Ascending aorta (tissue), 2 donors: ENCODE measurements at regions of chr13 and their contacts with region 1.

Region 1: DNA sequence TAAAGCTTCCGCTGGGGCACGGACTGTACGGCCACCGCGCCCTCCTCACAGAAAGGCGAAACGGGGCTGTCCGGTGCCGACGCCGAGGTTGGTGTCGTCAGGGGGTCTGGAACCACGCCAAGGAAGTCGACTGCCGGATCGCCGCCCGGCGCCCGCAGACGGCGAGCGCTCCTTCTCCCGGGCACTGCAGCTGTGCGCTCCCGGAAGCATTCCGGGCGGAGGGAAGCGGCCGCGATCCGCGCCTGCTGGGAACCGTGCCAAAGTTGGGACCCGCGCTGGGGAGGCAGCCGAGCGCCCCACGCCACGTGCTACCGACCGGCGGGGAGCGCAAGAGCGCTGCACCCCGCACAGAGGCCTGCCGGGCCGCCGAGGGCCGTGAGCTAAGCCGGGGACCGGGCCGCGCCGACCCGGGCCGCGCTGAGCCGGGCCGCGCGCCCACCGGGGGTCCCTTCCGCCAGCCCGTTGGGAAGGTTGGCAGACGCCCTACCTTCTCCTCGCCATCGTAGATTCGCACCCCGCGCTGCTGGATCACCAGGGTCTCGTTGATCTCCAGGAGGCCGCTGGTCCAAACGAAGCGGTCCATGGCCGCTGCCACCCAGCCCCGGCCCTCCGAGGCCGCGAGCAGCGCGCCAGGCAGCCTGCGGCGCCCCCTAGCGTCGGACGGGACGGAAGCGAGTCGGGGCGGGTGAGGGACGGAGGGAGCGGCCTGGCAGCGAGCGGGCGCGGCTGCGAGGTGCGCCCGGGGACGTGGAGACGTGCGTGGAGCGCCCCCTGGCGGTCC is at the start of gene VPS36:
- DNase-seq: peak; percentile 66 to 98
- H3K4me3 ChIP-seq: peak within 1 kb of the TSS; percentile 77 to 88
- H3K27ac ChIP-seq: peak within 1 kb of the TSS; percentile 85 to 88
- H3K4me1 ChIP-seq: peaks cover 0 to 5% of the 10 kb centered on the region in 2 donors
- H3K27me3 ChIP-seq: no peaks in the 10 kb centered on the region
- CTCF ChIP-seq: peak; percentile 97 to 99 (median 98)
- total RNA-seq, gene VPS36: 69.3 TPM

Region 2: GRCh38 chr13:52011632-52012511 is 438.3 kb before region 1 on chr13 and contains the start of gene ALG11:
- intact Hi-C with region 1: loop called (anchors 1 kb)
- DNase-seq: peak; percentile 97 to 100
- H3K4me3 ChIP-seq: peak within 1 kb of the TSS; percentile 73 to 75
- H3K27ac ChIP-seq: peak within 1 kb of the TSS; percentile 65 to 70
- H3K4me1 ChIP-seq: peaks cover 0 to 9% of the 10 kb centered on the region in 2 donors
- H3K27me3 ChIP-seq: no peaks in the 10 kb centered on the region
- CTCF ChIP-seq: no peak
- total RNA-seq, gene ALG11: 13.6 TPM

Region 3: DNA sequence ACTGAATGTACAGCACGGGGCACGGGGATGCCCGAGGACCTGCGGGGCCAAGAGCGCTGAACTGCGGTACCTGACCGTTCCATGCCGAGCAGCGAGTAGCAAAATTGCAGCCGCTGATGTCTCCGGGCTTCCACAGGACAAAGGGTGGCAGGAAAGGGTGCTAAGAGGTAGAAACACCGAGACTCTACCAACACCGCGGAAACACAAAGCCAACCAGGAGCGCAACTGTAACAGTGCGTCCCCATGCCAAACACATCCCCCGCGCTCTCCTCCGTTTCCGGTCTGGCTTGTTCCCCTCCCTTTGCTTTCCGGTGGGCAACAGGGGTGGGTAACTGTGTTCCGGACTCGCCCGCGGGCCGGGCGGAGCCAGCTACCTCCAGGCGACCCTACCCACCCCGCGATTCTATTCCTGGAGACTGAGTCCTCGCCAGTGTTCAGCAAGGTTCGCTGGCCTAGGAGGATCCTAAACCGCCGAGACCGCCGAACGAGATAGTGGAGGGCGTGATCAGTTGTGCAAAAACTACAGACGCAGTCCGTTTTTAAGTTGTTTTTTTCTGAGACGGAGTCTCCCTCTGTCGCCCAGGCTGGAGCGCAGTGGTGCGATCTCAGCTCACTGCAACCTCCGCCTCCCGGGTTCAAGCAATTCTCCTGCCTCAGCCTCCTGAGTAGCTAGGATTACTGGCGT is 255.9 kb before region 1 on chr13:
- intact Hi-C with region 1: loop called (anchors 2 kb)
- DNase-seq: peak; percentile 29 to 91
- H3K4me3 ChIP-seq: peak overlapping the region; percentile 66 to 86
- H3K27ac ChIP-seq: peak overlapping the region; percentile 72 to 80
- H3K4me1 ChIP-seq: peaks cover 0 to 2% of the 10 kb centered on the region in 2 donors
- H3K27me3 ChIP-seq: no peaks in the 10 kb centered on the region
- CTCF ChIP-seq: no peak

Region 4: GRCh38 chr13:52371736-52372247 is 78.4 kb before region 1 on chr13:
- intact Hi-C with region 1: no loop called
- DNase-seq: no peak
- H3K4me3 ChIP-seq: no peak overlapping the region
- H3K27ac ChIP-seq: no peak overlapping the region
- H3K4me1 ChIP-seq: no peaks in the 10 kb centered on the region
- H3K27me3 ChIP-seq: no peaks in the 10 kb centered on the region
- CTCF ChIP-seq: no peak

Region 5: GRCh38 chr13:52599848-52600603 is 149.8 kb after region 1 on chr13:
- intact Hi-C with region 1: loop called (anchors 10 kb)
- DNase-seq: no peak
- H3K4me3 ChIP-seq: peak overlapping the region; percentile 80 to 92
- H3K27ac ChIP-seq: peak overlapping the region; percentile 70 to 91
- H3K4me1 ChIP-seq: peaks cover 0 to 7% of the 10 kb centered on the region in 2 donors
- H3K27me3 ChIP-seq: no peaks in the 10 kb centered on the region
- CTCF ChIP-seq: peak in 1 of 3 experiments; percentile 7

Region 6: GRCh38 chr13:52652196-52652979 is 202.2 kb after region 1 on chr13 and contains the start of gene SUGT1:
- intact Hi-C with region 1: loop called (anchors 1 kb)
- DNase-seq: peak; percentile 88 to 98
- H3K4me3 ChIP-seq: peak within 1 kb of the TSS; percentile 83 to 96
- H3K27ac ChIP-seq: peak within 1 kb of the TSS; percentile 95 to 97
- H3K4me1 ChIP-seq: peaks cover 4 to 29% of the 10 kb centered on the region in 2 donors
- H3K27me3 ChIP-seq: no peaks in the 10 kb centered on the region
- CTCF ChIP-seq: peak; percentile 52 to 80 (median 73)
- total RNA-seq, gene SUGT1: 8.8 TPM